ENCODE measurements at regions of chr5 and their contacts with region 1.

Region 1: GRCh38 chr5:96220610-96221390 is 212.2 kb downstream of the PCSK1 start:
- DNase-seq: peak; percentile 88
- H3K4me3 ChIP-seq: peak overlapping the region in 1 of 3 experiments; percentile 14
- H3K27ac ChIP-seq: peak overlapping the region; percentile 95
- H3K4me1 ChIP-seq: peaks cover 25% of the 10 kb centered on the region
- H3K27me3 ChIP-seq: no peaks in the 10 kb centered on the region
- CTCF ChIP-seq: no peak

Region 2: DNA sequence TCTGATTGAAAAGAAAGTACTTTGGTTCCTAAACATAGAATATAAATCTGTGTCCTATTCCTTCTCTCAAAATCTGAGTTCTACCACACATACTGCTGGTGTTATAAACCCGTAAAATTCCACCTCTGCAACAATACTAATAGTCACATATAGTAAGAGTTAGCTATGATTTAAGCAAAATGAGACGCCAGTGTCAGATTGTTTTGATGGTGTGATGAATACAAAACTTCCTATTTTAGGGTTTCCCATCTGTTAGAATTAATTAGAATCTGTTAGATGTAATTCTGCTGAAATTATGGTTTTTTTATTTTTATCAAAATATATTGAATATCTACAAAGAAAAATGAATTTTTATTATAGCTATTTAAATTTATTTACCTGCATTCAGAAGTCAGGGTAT is 639.2 kb before region 1 on chr5:
- CTCF ChIA-PET with region 1: no interaction called
- dilution Hi-C with region 1: no loop called
- in situ Hi-C with region 1: no loop called
- intact Hi-C with region 1: no loop called
- DNase-seq: no peak
- H3K4me3 ChIP-seq: no peak overlapping the region
- H3K27ac ChIP-seq: no peak overlapping the region
- H3K4me1 ChIP-seq: no peaks in the 10 kb centered on the region
- H3K27me3 ChIP-seq: no peaks in the 10 kb centered on the region
- CTCF ChIP-seq: no peak

Region 3: DNA sequence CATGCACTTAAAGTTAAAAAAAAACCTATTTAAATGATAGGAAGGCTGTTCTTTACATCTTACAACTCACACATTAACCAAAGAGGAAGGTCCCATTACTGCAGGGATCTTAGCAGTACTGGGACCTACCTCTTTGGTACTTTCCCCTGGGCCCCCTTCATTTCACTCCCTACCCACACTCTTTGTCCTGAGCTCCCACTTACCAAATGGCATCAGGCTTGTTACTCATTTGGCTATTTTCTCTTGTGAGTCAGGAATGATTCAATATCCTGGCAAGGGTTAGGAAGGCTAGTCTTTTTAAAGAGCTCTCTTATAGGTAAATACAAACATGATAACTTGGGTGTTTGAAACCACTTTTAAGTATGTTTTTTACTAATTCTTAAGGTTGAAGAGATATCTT is 141.7 kb before region 1 on chr5:
- CTCF ChIA-PET with region 1: no interaction called
- dilution Hi-C with region 1: no loop called
- in situ Hi-C with region 1: no loop called
- intact Hi-C with region 1: loop called (anchors 1 kb)
- DNase-seq: peak; percentile 97
- H3K4me3 ChIP-seq: no peak overlapping the region
- H3K27ac ChIP-seq: peak overlapping the region; percentile 97
- H3K4me1 ChIP-seq: peaks cover 67% of the 10 kb centered on the region
- H3K27me3 ChIP-seq: no peaks in the 10 kb centered on the region
- CTCF ChIP-seq: no peak

Region 4: DNA sequence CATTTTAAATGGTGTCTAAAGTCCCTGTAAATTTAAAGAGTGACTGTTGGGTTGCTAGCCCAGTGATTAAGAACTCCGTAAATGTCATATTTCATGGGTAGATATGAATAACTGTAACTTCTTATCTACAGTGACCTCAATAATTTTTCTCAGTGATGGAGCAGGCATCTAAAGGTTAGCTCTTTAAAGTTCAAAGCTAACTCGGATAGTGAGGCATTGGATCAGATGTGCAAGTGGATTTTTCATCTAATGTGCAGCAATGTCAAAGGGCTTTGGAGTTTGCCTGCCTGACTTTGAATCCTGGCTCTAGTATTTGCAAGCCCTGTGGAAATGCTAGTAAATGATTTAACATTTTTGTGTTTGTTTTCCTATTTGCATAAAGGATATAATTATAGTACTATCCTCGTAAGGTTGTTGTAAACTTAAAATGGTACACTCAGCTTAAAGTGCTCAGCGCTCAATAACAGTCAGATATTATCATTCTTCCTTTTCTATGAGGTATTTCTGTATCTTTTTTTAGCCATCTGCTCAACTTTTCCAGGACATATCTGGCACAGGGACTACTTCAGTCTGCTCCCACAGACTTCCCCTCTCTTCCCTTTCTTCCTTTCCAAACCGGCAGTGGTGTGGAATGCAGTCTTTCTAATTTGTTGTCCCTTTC is 95.4 kb before region 1 on chr5:
- CTCF ChIA-PET with region 1: no interaction called
- dilution Hi-C with region 1: loop called (anchors 5 kb)
- in situ Hi-C with region 1: no loop called
- intact Hi-C with region 1: no loop called
- DNase-seq: no peak
- H3K4me3 ChIP-seq: no peak overlapping the region
- H3K27ac ChIP-seq: peak overlapping the region; percentile 15
- H3K4me1 ChIP-seq: peaks cover 32% of the 10 kb centered on the region
- H3K27me3 ChIP-seq: no peaks in the 10 kb centered on the region
- CTCF ChIP-seq: no peak

Region 5: DNA sequence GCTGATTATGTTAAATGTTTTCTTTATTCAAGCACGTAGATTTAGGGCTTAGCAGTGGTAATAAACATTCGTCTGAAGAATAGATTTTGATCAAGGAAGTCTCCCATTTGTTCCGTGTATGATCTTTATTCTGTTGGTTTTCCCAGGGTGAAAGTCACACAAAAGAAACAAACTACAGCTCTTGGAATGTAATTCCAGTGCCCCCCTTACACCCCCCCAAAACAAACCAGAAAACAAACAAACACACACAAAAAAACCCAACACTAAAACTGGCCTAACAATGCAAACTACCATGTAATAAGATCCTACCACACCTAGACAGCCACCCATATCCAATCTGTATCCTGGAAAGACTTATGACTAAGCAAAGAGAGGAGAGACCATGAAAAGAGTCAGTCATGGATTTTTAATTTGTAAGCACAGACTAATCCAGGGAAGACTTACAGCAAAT is 62.9 kb before region 1 on chr5:
- CTCF ChIA-PET with region 1: no interaction called
- dilution Hi-C with region 1: no loop called
- in situ Hi-C with region 1: no loop called
- intact Hi-C with region 1: loop called (anchors 2 kb)
- DNase-seq: peak; percentile 58
- H3K4me3 ChIP-seq: no peak overlapping the region
- H3K27ac ChIP-seq: peak overlapping the region; percentile 90
- H3K4me1 ChIP-seq: peaks cover 35% of the 10 kb centered on the region
- H3K27me3 ChIP-seq: no peaks in the 10 kb centered on the region
- CTCF ChIP-seq: no peak

Region 6: GRCh38 chr5:96279801-96280542 is 59.2 kb after region 1 on chr5:
- CTCF ChIA-PET with region 1: no interaction called
- dilution Hi-C with region 1: no loop called
- in situ Hi-C with region 1: no loop called
- intact Hi-C with region 1: loop called (anchors 2 kb)
- DNase-seq: peak; percentile 94
- H3K4me3 ChIP-seq: peak overlapping the region in 2 of 3 experiments; percentile 19 to 25
- H3K27ac ChIP-seq: peak overlapping the region; percentile 97
- H3K4me1 ChIP-seq: peaks cover 36% of the 10 kb centered on the region
- H3K27me3 ChIP-seq: no peaks in the 10 kb centered on the region
- CTCF ChIP-seq: peak in 1 of 2 donors; percentile 9